ENCODE measurements at regions of chr4 and their contacts with region 1.

Region 1: GRCh38 chr4:82798168-82799005 is at the start of gene SCD5:
- DNase-seq: peak; percentile 64
- H3K4me3 ChIP-seq: peak within 1 kb of the TSS; percentile 55 to 86 (median 72)
- H3K27ac ChIP-seq: peak within 1 kb of the TSS; percentile 54 to 82 (median 66)
- H3K4me1 ChIP-seq: peaks cover 0 to 30% (median 11%) of the 10 kb centered on the region in 4 donors
- H3K27me3 ChIP-seq: peaks cover 36% of the 10 kb centered on the region
- CTCF ChIP-seq: no peak
- EP300 ChIP-seq: no peak
- POLR2A ChIP-seq: no peak
- total RNA-seq, gene SCD5: 1.5 to 7.5 (median 3.5) TPM

Region 2: GRCh38 chr4:82811838-82812341 is 13.5 kb after region 1 on chr4:
- in situ Hi-C with region 1: no loop called
- intact Hi-C with region 1: loop called (anchors 1 kb)
- DNase-seq: no peak
- H3K4me3 ChIP-seq: no peak overlapping the region
- H3K27ac ChIP-seq: peak overlapping the region in 3 of 4 donors; percentile 38 to 55 (median 42)
- H3K4me1 ChIP-seq: peaks cover 0 to 9% (median 0%) of the 10 kb centered on the region in 4 donors
- H3K27me3 ChIP-seq: no peaks in the 10 kb centered on the region
- CTCF ChIP-seq: no peak
- EP300 ChIP-seq: no peak
- POLR2A ChIP-seq: no peak

Measured in transverse colon (tissue), 4 donors.